GM12878 (cell line): ENCODE measurements at regions of chr3 and their contacts with region 1.

Region 1: GRCh38 chr3:134308350-134308891 is 57.8 kb upstream of the RYK start:
- DNase-seq: peak; percentile 8
- ATAC-seq: peak; percentile 95
- H3K4me3 ChIP-seq: no peak overlapping the region
- H3K27ac ChIP-seq: no peak overlapping the region
- H3K4me1 ChIP-seq: no peaks in the 10 kb centered on the region
- H3K27me3 ChIP-seq: peaks cover 4 to 7% of the 10 kb centered on the region in 2 experiments
- CTCF ChIP-seq: peak; percentile 96 to 99 (median 99)
- EP300 ChIP-seq: no peak
- POLR2A ChIP-seq: no peak
- RAD21 ChIP-seq: peak; percentile 93

Region 2: DNA sequence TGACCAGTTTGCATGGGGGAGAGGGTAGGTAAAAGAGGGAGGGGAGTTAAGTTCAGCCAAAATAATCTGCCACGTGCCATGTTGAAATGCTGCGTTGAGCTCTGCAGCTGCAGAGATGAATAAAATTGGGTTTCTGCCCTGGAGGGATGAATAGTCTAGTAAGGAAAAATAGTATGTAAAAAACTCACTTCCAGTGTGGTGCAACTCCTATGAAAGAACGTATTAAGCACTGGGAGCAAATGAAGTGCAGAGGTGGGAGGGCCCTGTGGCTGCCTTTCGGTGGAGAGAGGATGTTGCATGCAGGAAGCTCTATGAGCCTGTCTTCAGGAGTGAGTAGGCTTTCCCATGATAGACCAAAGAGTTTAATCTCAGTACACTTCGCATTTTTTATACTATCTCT is 186.1 kb after region 1 on chr3:
- CTCF ChIA-PET with region 1: interaction called, 20 read pairs
- POLR2A ChIA-PET with region 1: no interaction called
- RAD21 ChIA-PET with region 1: interaction called, 3 read pairs
- SMC1A ChIA-PET with region 1: interaction called, 5 read pairs
- in situ Hi-C with region 1: no loop called
- intact Hi-C with region 1: no loop called
- DNase-seq: no peak
- ATAC-seq: no peak
- H3K4me3 ChIP-seq: no peak overlapping the region
- H3K27ac ChIP-seq: no peak overlapping the region
- H3K4me1 ChIP-seq: peaks cover 6% of the 10 kb centered on the region; the same call in 1 of the 2 replicates
- H3K27me3 ChIP-seq: no peaks in the 10 kb centered on the region
- CTCF ChIP-seq: no peak
- EP300 ChIP-seq: no peak
- POLR2A ChIP-seq: no peak
- RAD21 ChIP-seq: no peak